HEK293T (cell line): ENCODE measurements at regions of chr2 and their contacts with region 1.

Region 1: DNA sequence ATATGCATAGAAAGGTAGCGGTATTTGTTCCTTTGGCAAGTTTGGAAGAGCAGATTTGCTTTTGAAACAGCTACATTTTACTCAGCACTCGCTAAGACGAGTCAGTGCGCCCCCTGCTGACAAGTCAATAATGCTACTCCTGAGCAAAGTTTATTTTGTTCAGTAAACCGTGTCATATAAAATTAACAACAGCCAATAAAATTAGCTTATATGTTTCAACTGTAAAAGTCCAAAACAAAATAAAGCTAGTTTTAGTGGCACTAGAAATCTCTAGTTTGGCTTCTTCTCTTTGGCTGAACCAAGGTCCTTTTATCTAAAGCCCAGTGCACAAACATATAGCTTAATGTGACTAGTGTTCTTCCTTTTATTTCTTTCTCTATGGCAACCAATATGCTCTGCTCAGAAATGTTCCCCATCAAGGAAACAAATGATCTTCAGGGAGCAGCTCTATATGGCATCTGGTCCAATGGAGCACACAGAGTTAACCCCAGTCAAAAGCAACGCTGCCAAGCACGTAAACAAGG is 4.2 kb upstream of the POU3F3 start:
- DNase-seq: no peak

Region 2: GRCh38 chr2:104862058-104862941 is 12.6 kb after region 1 on chr2:
- CTCF ChIA-PET with region 1: interaction called, 8 read pairs
- POLR2A ChIA-PET with region 1: interaction called, 11 read pairs
- DNase-seq: no peak

Region 3: DNA sequence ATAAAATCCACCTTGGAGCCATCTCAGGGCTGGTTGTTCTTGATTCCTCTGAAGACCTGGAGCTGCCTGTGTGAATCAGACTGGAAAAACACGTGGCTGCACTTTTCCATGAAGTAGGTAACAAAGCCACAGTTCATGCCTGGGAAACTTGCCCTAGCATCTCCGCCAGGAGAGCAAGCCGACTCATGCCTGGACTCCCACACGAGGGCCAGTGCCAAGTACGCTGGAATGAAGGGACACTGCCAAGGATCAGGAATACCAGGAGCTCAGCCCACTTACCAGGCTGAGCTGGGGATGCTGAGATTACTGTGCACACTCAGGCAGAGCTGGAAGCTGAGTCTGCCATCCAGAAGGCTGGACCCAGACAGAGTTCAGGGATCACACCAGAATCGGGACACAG is 560.0 kb after region 1 on chr2:
- CTCF ChIA-PET with region 1: no interaction called
- POLR2A ChIA-PET with region 1: no interaction called
- DNase-seq: no peak